Head of caudate nucleus (tissue), 42 donors: ENCODE measurements at regions of chr14 and their contacts with region 1.

Region 1: DNA sequence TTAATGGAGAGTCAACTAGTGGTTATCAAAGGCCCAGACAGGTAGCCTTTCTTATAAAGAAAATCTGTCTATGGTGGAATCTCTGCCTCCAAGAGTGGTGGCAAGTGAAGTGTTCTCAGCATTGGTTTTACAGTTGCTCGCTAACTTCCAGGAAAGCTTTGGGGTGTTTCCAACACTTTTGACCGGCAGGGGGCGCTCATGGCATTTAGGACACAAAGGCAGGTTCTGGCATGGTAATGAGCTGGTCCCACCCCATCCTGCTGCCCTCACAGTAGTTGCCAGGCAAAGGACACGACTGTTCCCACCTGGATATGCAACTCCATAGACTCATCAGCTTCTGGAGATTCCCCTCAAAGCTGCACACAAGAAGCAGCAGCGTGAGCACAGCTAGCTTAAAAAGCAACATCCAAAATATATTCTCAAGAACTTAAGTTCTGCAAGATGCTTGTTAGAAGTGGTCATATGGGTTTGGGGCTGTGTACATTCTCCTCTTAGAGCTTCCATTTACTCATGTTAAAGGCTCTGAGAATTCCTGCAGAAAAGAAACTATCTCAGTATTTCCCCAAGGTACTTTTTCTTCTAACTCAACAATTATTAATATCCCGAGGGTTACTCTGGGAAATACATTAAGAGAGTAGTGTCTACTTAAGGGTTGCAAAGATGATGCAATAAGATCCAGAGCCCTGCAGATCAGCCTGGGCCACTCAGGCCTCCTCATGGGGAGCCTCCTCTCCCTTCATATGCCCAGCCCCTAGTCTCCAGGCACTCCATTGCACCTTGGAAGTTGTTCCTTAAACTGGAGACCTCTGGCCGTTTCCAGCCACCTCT is 14.8 kb downstream of the PROX2 start:
- DNase-seq: peak; percentile 80 to 97 (median 93)

Region 2: GRCh38 chr14:74712499-74713394 is 148.4 kb before region 1 on chr14 and contains the starts of genes AREL1 and FCF1:
- intact Hi-C with region 1: no loop called
- DNase-seq: peak; percentile 76 to 96 (median 89)

Region 3: GRCh38 chr14:74905375-74906142 is 44.4 kb after region 1 on chr14:
- intact Hi-C with region 1: loop called (anchors 5 kb)
- DNase-seq: peak; percentile 47 to 93 (median 82)